Activated naive CD4-positive, alpha-beta T cell treated with anti-CD3 and anti-CD28 coated beads for 36 hours (primary cell): ENCODE measurements at regions of chr4 and their contacts with region 1.

Region 1: DNA sequence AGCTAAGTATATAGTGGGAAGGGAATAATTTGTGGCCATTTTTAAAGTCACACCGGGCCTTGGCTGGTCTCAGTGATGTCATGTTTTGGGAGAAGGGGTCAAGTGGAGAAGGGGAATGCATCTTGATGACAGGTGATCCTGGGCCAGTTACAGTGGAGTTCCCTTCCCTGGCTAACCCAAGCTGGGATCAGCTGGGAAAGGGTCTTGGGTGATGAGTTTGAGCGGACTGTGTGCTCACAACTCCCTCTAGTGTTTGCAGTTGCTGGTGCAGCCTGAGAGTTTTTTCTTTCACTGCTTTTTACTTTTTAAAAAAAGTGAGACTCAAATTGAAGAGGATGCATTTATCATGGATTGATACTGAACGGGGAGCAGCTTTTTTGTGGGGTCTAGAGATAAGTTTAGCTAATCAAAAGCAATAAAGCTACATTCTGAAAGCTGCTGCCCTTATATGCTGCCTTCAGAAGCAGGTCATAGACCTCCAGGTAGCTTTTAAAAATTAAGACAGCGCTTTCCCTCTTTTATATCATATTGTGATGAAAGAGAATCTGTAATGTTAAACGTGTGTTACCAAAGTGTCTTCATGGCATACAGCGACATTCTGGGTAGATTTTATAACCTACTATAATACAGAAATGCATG is 164.7 kb downstream of the DCLK2 start:
- DNase-seq: peak; percentile 33
- H3K4me3 Mint-ChIP-seq: no peak overlapping the region
- H3K27ac Mint-ChIP-seq: no peak overlapping the region
- H3K4me1 Mint-ChIP-seq: no peaks in the 10 kb centered on the region
- H3K27me3 Mint-ChIP-seq: peaks cover 2% of the 10 kb centered on the region

Region 2: DNA sequence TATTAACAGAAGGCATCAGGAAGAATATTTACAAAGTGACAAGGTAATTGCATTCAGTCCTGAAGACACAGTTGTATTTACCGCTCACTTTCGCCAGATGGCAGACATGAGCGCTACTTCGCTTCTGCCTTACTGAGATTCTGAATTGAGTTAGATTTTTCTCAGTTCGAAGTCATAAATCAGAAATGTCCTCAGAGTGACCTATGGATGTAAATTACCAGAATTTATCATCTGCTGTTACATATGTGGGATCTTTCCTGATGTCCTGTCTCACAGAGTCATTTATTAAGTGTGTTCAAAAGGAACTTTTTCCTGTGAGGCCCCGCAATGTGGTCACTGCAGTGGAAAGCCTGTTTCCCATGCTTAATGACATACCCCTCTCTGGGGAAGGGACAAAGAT is 262.0 kb before region 1 on chr4:
- CTCF ChIA-PET with region 1: interaction called, 8 read pairs
- intact Hi-C with region 1: loop called (anchors 1 kb)
- DNase-seq: peak; percentile 69
- H3K4me3 Mint-ChIP-seq: no peak overlapping the region
- H3K27ac Mint-ChIP-seq: no peak overlapping the region
- H3K4me1 Mint-ChIP-seq: no peaks in the 10 kb centered on the region
- H3K27me3 Mint-ChIP-seq: no peaks in the 10 kb centered on the region

Region 3: GRCh38 chr4:149999485-150000074 is 243.4 kb before region 1 on chr4:
- CTCF ChIA-PET with region 1: interaction called, 7 read pairs
- intact Hi-C with region 1: loop called (anchors 1 kb)
- DNase-seq: peak; percentile 11
- H3K4me3 Mint-ChIP-seq: no peak overlapping the region
- H3K27ac Mint-ChIP-seq: no peak overlapping the region
- H3K4me1 Mint-ChIP-seq: no peaks in the 10 kb centered on the region
- H3K27me3 Mint-ChIP-seq: peaks cover 17% of the 10 kb centered on the region

Region 4: GRCh38 chr4:150010525-150011126 is 232.3 kb before region 1 on chr4:
- CTCF ChIA-PET with region 1: interaction called, 5 read pairs
- intact Hi-C with region 1: loop called (anchors 2 kb)
- DNase-seq: peak; percentile 15
- H3K4me3 Mint-ChIP-seq: no peak overlapping the region
- H3K27ac Mint-ChIP-seq: no peak overlapping the region
- H3K4me1 Mint-ChIP-seq: no peaks in the 10 kb centered on the region
- H3K27me3 Mint-ChIP-seq: peaks cover 10% of the 10 kb centered on the region

Region 5: DNA sequence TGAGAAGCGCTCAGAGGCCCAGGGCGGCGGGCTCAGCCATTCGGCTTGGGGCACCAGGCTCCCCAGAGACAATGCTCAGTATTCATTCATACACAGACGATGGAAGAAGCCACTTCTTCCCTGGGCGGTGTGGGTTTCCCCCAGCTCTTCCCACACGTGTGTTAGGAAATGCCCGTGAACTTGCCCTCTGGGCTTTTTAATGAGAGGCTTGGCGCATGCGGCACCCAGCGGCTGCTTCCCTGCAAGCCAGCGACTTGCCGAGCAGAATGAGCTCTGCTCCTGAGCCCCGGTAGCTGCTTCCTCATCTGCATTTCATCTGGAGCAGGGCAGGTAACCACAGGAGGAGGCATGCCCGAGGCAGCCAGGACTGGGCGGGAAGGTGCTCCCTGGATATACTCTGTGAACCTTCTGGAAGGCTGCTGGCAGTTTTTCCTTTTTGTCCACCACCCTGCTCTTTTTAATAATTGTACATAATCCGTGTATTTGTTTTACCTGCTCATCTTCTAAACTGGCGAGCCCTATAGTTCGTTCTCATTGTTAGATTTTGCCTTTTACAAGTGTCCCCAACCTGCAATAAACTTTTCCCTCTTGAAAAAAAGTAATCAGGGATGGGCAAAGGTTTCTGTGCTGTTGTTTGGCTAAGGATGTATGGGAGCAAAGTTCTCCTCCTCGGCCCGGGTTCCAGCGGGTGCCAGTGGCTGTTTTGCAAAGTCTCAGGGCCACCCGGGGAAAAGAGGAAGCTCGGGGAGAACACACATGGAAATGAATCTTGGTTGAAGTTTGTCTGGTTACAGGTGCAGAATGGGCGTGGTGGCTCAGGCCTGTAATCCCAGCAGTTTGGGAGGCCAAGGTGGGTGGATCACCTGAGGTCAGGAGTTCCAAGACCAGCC is 14.1 kb after region 1 on chr4:
- CTCF ChIA-PET with region 1: interaction called, 12 read pairs
- intact Hi-C with region 1: no loop called
- DNase-seq: no peak
- H3K4me3 Mint-ChIP-seq: no peak overlapping the region
- H3K27ac Mint-ChIP-seq: no peak overlapping the region
- H3K4me1 Mint-ChIP-seq: no peaks in the 10 kb centered on the region
- H3K27me3 Mint-ChIP-seq: no peaks in the 10 kb centered on the region

Region 6: DNA sequence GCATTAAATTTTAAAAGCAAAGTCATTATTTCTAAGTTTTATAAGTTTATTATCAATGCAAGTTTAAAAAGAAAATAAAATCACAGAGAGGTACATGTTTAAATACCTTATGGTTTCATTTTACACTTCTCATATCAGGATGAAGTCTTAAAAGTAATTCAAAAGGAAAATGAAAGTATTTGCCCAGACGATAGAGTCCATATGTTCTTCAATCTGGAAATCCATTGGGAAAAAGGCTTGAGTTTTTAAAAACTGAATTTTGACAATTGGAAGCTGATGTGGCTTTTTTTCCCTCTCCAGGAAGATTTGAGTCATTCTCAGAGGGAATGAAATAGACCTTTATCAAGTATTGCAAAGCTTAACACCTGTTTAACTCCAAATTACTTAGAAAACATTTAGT is 376.1 kb after region 1 on chr4:
- CTCF ChIA-PET with region 1: no interaction called
- intact Hi-C with region 1: no loop called
- DNase-seq: no peak
- H3K4me3 Mint-ChIP-seq: no peak overlapping the region
- H3K27ac Mint-ChIP-seq: no peak overlapping the region
- H3K4me1 Mint-ChIP-seq: no peaks in the 10 kb centered on the region
- H3K27me3 Mint-ChIP-seq: no peaks in the 10 kb centered on the region